PC-9 (cell line): ENCODE measurements at regions of chr15 and their contacts with region 1.

Region 1: GRCh38 chr15:39213385-39213840 is 367.5 kb upstream of the THBS1 start:
- DNase-seq: peak; percentile 85 to 97
- H3K4me3 ChIP-seq: 0 out of 2 replicates have a peak overlapping the region, but pooled peaks have one; percentile 26
- H3K27ac ChIP-seq: peak overlapping the region; percentile 77
- H3K4me1 ChIP-seq: peaks cover 16% of the 10 kb centered on the region
- H3K27me3 ChIP-seq: no peaks in the 10 kb centered on the region
- CTCF ChIP-seq: no peak

Region 2: GRCh38 chr15:39165020-39165706 is 48.2 kb before region 1 on chr15:
- CTCF ChIA-PET with region 1: no interaction called
- POLR2A ChIA-PET with region 1: no interaction called
- intact Hi-C with region 1: no loop called
- DNase-seq: no peak
- H3K4me3 ChIP-seq: no peak overlapping the region
- H3K27ac ChIP-seq: no peak overlapping the region
- H3K4me1 ChIP-seq: no peaks in the 10 kb centered on the region
- H3K27me3 ChIP-seq: no peaks in the 10 kb centered on the region
- CTCF ChIP-seq: no peak

Region 3: GRCh38 chr15:39188925-39189324 is 24.5 kb before region 1 on chr15:
- CTCF ChIA-PET with region 1: no interaction called
- POLR2A ChIA-PET with region 1: interaction called, 4 read pairs
- intact Hi-C with region 1: loop called (anchors 1 kb)
- DNase-seq: peak; percentile 36 to 85
- H3K4me3 ChIP-seq: no peak overlapping the region
- H3K27ac ChIP-seq: peak overlapping the region; percentile 52
- H3K4me1 ChIP-seq: peaks cover 35% of the 10 kb centered on the region
- H3K27me3 ChIP-seq: no peaks in the 10 kb centered on the region
- CTCF ChIP-seq: no peak

Region 4: DNA sequence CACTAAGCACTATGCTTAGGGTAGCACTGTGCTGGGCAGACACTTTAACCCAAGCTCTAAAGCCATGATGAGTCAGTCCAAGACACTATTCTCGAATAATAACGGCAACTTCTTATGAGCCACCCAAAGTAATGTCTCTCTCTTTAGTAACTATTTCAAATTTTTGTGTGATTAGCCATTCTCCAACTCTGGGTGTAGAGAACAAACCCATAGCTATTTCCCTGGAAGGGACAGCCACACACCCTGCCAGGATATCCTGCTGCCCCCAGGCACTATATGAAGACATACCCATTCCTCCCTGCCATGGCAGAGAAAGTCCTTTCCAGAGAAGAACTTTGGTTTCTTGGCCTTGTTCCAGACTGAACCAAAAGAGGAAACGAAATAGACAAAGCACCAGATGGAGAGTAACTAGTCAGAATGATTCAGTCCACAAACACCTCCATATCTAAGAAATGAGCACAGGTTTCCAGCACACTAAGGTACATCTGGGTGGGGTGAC is 17.4 kb before region 1 on chr15:
- CTCF ChIA-PET with region 1: interaction called, 3 read pairs
- POLR2A ChIA-PET with region 1: interaction called, 13 read pairs
- intact Hi-C with region 1: loop called (anchors 1 kb)
- DNase-seq: peak; percentile 86 to 97
- H3K4me3 ChIP-seq: no peak overlapping the region
- H3K27ac ChIP-seq: peak overlapping the region; percentile 79
- H3K4me1 ChIP-seq: peaks cover 32% of the 10 kb centered on the region
- H3K27me3 ChIP-seq: no peaks in the 10 kb centered on the region
- CTCF ChIP-seq: no peak

Region 5: GRCh38 chr15:39301589-39301999 is 88.2 kb after region 1 on chr15:
- CTCF ChIA-PET with region 1: no interaction called
- POLR2A ChIA-PET with region 1: interaction called, 11 read pairs
- intact Hi-C with region 1: no loop called
- DNase-seq: no peak
- H3K4me3 ChIP-seq: no peak overlapping the region
- H3K27ac ChIP-seq: no peak overlapping the region
- H3K4me1 ChIP-seq: peaks cover 20% of the 10 kb centered on the region
- H3K27me3 ChIP-seq: no peaks in the 10 kb centered on the region
- CTCF ChIP-seq: no peak

Region 6: GRCh38 chr15:39404767-39405181 is 191.4 kb after region 1 on chr15:
- CTCF ChIA-PET with region 1: no interaction called
- POLR2A ChIA-PET with region 1: interaction called, 15 read pairs
- intact Hi-C with region 1: no loop called
- DNase-seq: peak; percentile 70 to 95
- H3K4me3 ChIP-seq: no peak overlapping the region
- H3K27ac ChIP-seq: no peak overlapping the region
- H3K4me1 ChIP-seq: peaks cover 32% of the 10 kb centered on the region
- H3K27me3 ChIP-seq: no peaks in the 10 kb centered on the region
- CTCF ChIP-seq: no peak

Region 7: DNA sequence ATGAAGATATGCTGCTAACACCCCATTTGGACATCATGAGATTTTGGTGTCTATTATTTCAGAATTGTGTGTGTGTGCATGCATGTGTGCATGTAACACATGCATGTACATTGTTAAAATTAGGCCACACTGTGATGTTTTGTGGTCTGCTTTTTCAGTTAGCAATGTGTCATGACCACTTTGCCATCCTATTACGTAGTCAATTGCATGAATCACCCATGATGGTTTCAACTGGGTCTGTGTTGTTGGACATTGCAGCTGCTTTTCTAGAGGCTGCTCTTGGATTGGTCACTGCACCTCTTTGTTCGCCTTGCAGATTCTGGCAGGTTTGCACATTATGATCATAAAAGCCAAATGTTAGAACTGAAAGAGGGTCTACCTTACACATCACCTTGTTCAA is 266.5 kb after region 1 on chr15:
- CTCF ChIA-PET with region 1: no interaction called
- POLR2A ChIA-PET with region 1: no interaction called
- intact Hi-C with region 1: no loop called
- DNase-seq: no peak
- H3K4me3 ChIP-seq: no peak overlapping the region
- H3K27ac ChIP-seq: no peak overlapping the region
- H3K4me1 ChIP-seq: no peaks in the 10 kb centered on the region
- H3K27me3 ChIP-seq: no peaks in the 10 kb centered on the region
- CTCF ChIP-seq: no peak